MCF 10A (cell line): ENCODE measurements at regions of chr12 and their contacts with region 1.

Region 1: DNA sequence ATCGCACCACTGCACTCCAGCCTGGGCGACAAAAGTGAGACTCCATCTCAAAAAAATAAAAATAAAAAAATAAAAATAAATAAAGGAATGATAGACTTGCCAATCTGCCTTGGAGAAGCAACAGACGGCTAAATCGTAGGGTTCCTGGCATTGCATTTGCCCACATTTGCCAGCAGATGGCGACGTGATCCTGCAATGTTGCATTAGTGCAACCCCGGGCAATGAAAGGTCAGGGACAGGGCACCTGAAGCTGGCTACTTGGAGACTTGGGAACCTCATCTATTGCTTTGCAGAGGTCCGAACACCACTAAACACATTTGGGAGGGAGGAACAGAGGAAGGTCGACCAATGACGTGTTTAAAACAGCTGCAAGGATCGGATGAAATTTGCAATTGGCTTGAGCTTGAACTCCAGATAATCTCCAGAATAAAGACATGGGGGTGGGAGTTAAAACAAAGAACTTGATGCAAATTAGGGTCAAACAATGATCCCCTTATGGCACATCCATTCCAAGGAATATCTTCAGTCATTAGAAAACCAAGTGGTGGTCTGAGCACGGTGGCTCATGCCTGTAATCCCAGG is 34.6 kb downstream of the SPRING1 start:
- DNase-seq: peak; percentile 79
- H3K4me3 Mint-ChIP-seq: no peak overlapping the region
- H3K27ac Mint-ChIP-seq: no peak overlapping the region
- H3K4me1 Mint-ChIP-seq: no peaks in the 10 kb centered on the region
- H3K27me3 Mint-ChIP-seq: no peaks in the 10 kb centered on the region
- CTCF ChIP-seq: peak; percentile 88

Region 2: GRCh38 chr12:116582610-116583009 is 120.7 kb before region 1 on chr12:
- CTCF ChIA-PET with region 1: no interaction called
- POLR2A ChIA-PET with region 1: no interaction called
- intact Hi-C with region 1: no loop called
- DNase-seq: no peak
- H3K4me3 Mint-ChIP-seq: no peak overlapping the region
- H3K27ac Mint-ChIP-seq: no peak overlapping the region
- H3K4me1 Mint-ChIP-seq: no peaks in the 10 kb centered on the region
- H3K27me3 Mint-ChIP-seq: no peaks in the 10 kb centered on the region
- CTCF ChIP-seq: no peak

Region 3: DNA sequence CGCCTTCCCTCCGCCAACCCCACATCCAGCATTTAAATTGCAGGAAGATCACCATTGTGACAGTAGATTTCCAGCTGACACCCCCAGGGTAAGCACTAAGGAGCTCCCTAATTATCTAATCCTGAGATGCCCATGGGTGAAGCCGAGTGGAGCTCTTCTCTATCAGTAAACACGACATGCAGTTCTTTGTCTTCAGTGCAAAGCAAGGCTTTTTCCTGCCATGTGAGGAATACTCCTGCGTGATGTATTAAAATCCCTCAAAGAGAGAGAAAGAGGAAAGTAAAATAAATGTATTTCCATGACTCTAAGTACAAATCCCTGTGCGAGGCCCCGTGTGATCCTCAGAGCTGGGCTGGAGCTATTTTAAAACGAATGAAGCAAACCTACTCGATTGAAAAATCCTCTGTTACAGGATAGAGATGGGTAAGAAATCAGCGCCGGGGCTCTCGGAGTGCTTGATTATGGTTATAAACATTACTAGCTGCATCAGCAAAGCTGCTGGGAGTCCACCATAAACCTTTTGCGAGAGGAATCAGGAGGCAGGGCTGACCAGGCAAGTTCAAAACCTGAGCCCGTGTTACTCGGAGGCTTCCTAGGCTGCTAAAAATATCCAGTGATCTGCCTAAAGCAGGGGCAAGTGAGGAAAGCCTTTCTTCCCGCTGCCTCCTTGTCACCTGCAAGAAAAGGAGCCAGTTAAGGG is 82.7 kb before region 1 on chr12:
- CTCF ChIA-PET with region 1: no interaction called
- POLR2A ChIA-PET with region 1: no interaction called
- intact Hi-C with region 1: no loop called
- DNase-seq: no peak
- H3K4me3 Mint-ChIP-seq: no peak overlapping the region
- H3K27ac Mint-ChIP-seq: no peak overlapping the region
- H3K4me1 Mint-ChIP-seq: no peaks in the 10 kb centered on the region
- H3K27me3 Mint-ChIP-seq: peaks cover 16% of the 10 kb centered on the region
- CTCF ChIP-seq: no peak

Region 4: DNA sequence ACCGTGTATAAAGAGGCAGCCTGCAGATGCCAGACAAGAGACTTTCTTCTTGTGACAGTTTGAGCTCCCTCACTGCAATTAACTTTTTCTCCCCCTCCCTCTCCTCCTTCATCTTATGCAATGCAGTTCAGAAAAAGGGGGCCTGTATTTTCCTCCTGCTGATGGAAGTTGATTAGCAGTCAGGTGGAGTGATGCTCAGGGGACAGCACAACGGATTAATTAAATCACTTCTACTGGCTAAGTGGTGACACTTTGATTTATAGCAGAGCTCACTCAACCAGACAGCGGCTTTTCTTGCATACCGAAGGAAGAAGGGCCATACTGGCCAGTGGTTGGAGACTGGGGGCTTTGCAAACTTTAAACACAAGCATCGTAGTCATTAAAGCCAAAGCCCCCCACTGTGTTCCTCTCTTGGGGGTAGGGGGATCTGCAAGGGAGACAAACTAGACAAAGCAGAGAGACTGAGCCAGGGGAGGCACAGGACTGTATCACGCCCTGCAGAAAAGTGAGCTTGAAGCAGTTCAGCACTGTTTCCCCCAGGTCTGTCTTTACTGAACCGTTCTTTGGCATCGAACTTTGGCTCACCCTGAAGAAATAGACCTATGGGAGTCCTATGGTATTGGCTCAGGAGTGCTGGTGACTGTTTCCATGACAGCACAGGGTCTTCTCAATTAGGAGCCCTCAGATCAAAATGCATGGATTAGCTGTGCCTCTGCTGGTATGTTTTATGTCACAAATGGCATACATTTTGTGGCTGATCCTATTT is 13.1 kb before region 1 on chr12:
- CTCF ChIA-PET with region 1: interaction called, 14 read pairs
- POLR2A ChIA-PET with region 1: no interaction called
- intact Hi-C with region 1: no loop called
- DNase-seq: no peak
- H3K4me3 Mint-ChIP-seq: no peak overlapping the region
- H3K27ac Mint-ChIP-seq: no peak overlapping the region
- H3K4me1 Mint-ChIP-seq: peaks cover 11% of the 10 kb centered on the region
- H3K27me3 Mint-ChIP-seq: peaks cover 40% of the 10 kb centered on the region
- CTCF ChIP-seq: no peak

Region 5: GRCh38 chr12:116717466-116718437 is 14.4 kb after region 1 on chr12:
- CTCF ChIA-PET with region 1: interaction called, 18 read pairs
- POLR2A ChIA-PET with region 1: interaction called, 4 read pairs
- intact Hi-C with region 1: no loop called
- DNase-seq: no peak
- H3K4me3 Mint-ChIP-seq: no peak overlapping the region
- H3K27ac Mint-ChIP-seq: no peak overlapping the region
- H3K4me1 Mint-ChIP-seq: no peaks in the 10 kb centered on the region
- H3K27me3 Mint-ChIP-seq: no peaks in the 10 kb centered on the region
- CTCF ChIP-seq: no peak

Region 6: DNA sequence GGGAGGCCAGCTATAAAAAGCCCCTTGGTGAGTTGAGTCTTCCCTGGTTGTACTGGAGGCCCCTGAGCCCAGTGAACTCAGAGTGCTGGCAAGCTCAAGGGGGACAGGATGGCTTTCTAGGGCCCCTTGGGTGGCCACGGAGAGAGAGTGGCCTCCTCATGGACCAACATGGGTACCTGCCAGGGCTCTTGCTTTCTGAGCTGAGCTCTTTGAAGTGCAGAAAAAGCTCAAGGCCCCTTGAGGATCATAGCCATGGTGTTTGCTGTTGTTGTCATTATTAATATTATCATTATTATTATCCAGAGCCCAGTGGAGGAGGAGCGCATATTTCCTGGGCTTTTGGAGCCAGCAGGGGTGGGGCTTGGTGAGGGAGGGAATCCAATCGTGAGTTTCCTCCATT is 41.5 kb after region 1 on chr12:
- CTCF ChIA-PET with region 1: no interaction called
- POLR2A ChIA-PET with region 1: no interaction called
- intact Hi-C with region 1: no loop called
- DNase-seq: no peak
- H3K4me3 Mint-ChIP-seq: no peak overlapping the region
- H3K27ac Mint-ChIP-seq: no peak overlapping the region
- H3K4me1 Mint-ChIP-seq: no peaks in the 10 kb centered on the region
- H3K27me3 Mint-ChIP-seq: no peaks in the 10 kb centered on the region
- CTCF ChIP-seq: no peak

Region 7: GRCh38 chr12:116880817-116881324 is 177.6 kb after region 1 on chr12:
- CTCF ChIA-PET with region 1: interaction called, 14 read pairs
- POLR2A ChIA-PET with region 1: interaction called, 7 read pairs
- intact Hi-C with region 1: loop called (anchors 1 kb)
- DNase-seq: peak; percentile 54
- H3K4me3 Mint-ChIP-seq: peak overlapping the region; percentile 80
- H3K27ac Mint-ChIP-seq: no peak overlapping the region
- H3K4me1 Mint-ChIP-seq: peaks cover 19% of the 10 kb centered on the region
- H3K27me3 Mint-ChIP-seq: peaks cover 25% of the 10 kb centered on the region
- CTCF ChIP-seq: no peak

Region 8: GRCh38 chr12:116955382-116956021 is 252.2 kb after region 1 on chr12:
- CTCF ChIA-PET with region 1: interaction called, 17 read pairs
- POLR2A ChIA-PET with region 1: no interaction called
- intact Hi-C with region 1: loop called (anchors 1 kb)
- DNase-seq: peak; percentile 71
- H3K4me3 Mint-ChIP-seq: no peak overlapping the region
- H3K27ac Mint-ChIP-seq: no peak overlapping the region
- H3K4me1 Mint-ChIP-seq: no peaks in the 10 kb centered on the region
- H3K27me3 Mint-ChIP-seq: no peaks in the 10 kb centered on the region
- CTCF ChIP-seq: peak; percentile 24

Region 9: GRCh38 chr12:117025481-117026151 is 322.3 kb after region 1 on chr12:
- CTCF ChIA-PET with region 1: interaction called, 3 read pairs
- POLR2A ChIA-PET with region 1: no interaction called
- intact Hi-C with region 1: loop called (anchors 1 kb)
- DNase-seq: peak; percentile 70
- H3K4me3 Mint-ChIP-seq: no peak overlapping the region
- H3K27ac Mint-ChIP-seq: no peak overlapping the region
- H3K4me1 Mint-ChIP-seq: no peaks in the 10 kb centered on the region
- H3K27me3 Mint-ChIP-seq: no peaks in the 10 kb centered on the region
- CTCF ChIP-seq: peak; percentile 73

Region 10: GRCh38 chr12:117119592-117120198 is 416.4 kb after region 1 on chr12:
- CTCF ChIA-PET with region 1: interaction called, 9 read pairs
- POLR2A ChIA-PET with region 1: no interaction called
- intact Hi-C with region 1: loop called (anchors 1 kb)
- DNase-seq: peak; percentile 63
- H3K4me3 Mint-ChIP-seq: no peak overlapping the region
- H3K27ac Mint-ChIP-seq: no peak overlapping the region
- H3K4me1 Mint-ChIP-seq: no peaks in the 10 kb centered on the region
- H3K27me3 Mint-ChIP-seq: no peaks in the 10 kb centered on the region
- CTCF ChIP-seq: peak; percentile 73